Aorta (tissue), 5 donors: ENCODE measurements at regions of chr3 and their contacts with region 1.

Region 1: GRCh38 chr3:42012935-42013690 is 51.2 kb upstream of the ULK4 start:
- DNase-seq: peak; percentile 84 to 93
- ATAC-seq: peak; percentile 91
- H3K4me3 ChIP-seq: peak overlapping the region; percentile 75 to 80
- H3K27ac ChIP-seq: peak overlapping the region in 1 of 2 donors; percentile 73
- H3K4me1 ChIP-seq: no peaks in the 10 kb centered on the region
- H3K27me3 ChIP-seq: no peaks in the 10 kb centered on the region

Region 2: GRCh38 chr3:41900265-41900664 is 112.8 kb before region 1 on chr3:
- intact Hi-C with region 1: loop called in 1 of 2 experiments (anchors 10 kb)
- DNase-seq: no peak
- ATAC-seq: no peak
- H3K4me3 ChIP-seq: no peak overlapping the region
- H3K27ac ChIP-seq: no peak overlapping the region
- H3K4me1 ChIP-seq: no peaks in the 10 kb centered on the region
- H3K27me3 ChIP-seq: no peaks in the 10 kb centered on the region

Region 3: GRCh38 chr3:41961750-41962679 is 51.1 kb before region 1 on chr3 and contains the start of gene ULK4:
- intact Hi-C with region 1: loop called in 1 of 2 experiments (anchors 5 kb)
- DNase-seq: peak; percentile 98 to 99
- ATAC-seq: peak; percentile 98
- H3K4me3 ChIP-seq: peak within 1 kb of the TSS; percentile 65 to 66
- H3K27ac ChIP-seq: peak within 1 kb of the TSS; percentile 20 to 91
- H3K4me1 ChIP-seq: no peaks in the 10 kb centered on the region
- H3K27me3 ChIP-seq: no peaks in the 10 kb centered on the region
- total RNA-seq, gene ULK4: 10.1 to 15.2 TPM

Region 4: GRCh38 chr3:41975421-41976103 is 37.6 kb before region 1 on chr3:
- intact Hi-C with region 1: no loop called
- DNase-seq: no peak
- ATAC-seq: no peak
- H3K4me3 ChIP-seq: no peak overlapping the region
- H3K27ac ChIP-seq: no peak overlapping the region
- H3K4me1 ChIP-seq: no peaks in the 10 kb centered on the region
- H3K27me3 ChIP-seq: no peaks in the 10 kb centered on the region

Region 5: GRCh38 chr3:42071904-42072592 is 58.9 kb after region 1 on chr3:
- intact Hi-C with region 1: loop called in 1 of 2 experiments (anchors 2 kb)
- DNase-seq: peak; percentile 82 to 86
- ATAC-seq: peak; percentile 89
- H3K4me3 ChIP-seq: peak overlapping the region in 1 of 2 donors; percentile 27
- H3K27ac ChIP-seq: peak overlapping the region; percentile 79 to 100
- H3K4me1 ChIP-seq: peaks cover 2 to 5% of the 10 kb centered on the region in 2 donors
- H3K27me3 ChIP-seq: no peaks in the 10 kb centered on the region

Region 6: DNA sequence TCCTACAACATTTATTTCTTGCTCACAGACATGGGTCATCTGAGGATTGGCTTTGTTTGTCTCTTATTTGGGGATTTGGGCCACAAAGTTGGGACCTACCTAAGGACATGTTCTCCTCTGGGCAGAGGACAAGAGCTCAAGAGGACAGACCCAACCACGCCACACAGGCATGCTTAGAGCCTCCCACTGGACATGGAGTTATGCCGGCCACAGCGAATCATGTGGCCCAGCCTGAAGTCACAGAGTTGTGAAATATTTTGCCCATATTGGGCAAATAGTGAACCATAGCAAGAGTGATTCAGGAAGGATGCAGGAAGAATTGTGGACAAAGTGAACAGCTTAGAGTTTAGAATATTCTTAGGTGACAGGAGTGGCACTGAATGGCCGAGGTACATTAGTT is 87.9 kb after region 1 on chr3:
- intact Hi-C with region 1: loop called (anchors 5 kb)
- DNase-seq: peak in 1 of 2 donors; percentile 79
- ATAC-seq: peak; percentile 87
- H3K4me3 ChIP-seq: no peak overlapping the region
- H3K27ac ChIP-seq: no peak overlapping the region
- H3K4me1 ChIP-seq: no peaks in the 10 kb centered on the region
- H3K27me3 ChIP-seq: no peaks in the 10 kb centered on the region